OCI-LY7 (cell line): ENCODE measurements at regions of chr5 and their contacts with region 1.

Region 1: GRCh38 chr5:157900644-157901043 is 41.7 kb upstream of the CLINT1 start:
- DNase-seq: peak; percentile 95
- H3K4me3 ChIP-seq: no peak overlapping the region
- H3K27ac ChIP-seq: peak overlapping the region; percentile 82
- H3K4me1 ChIP-seq: peaks cover 26% of the 10 kb centered on the region
- CTCF ChIP-seq: no peak

Region 2: GRCh38 chr5:157828944-157829632 is 71.6 kb before region 1 on chr5:
- CTCF ChIA-PET with region 1: no interaction called
- POLR2A ChIA-PET with region 1: interaction called, 9 read pairs
- intact Hi-C with region 1: loop called (anchors 2 kb)
- DNase-seq: no peak
- H3K4me3 ChIP-seq: peak overlapping the region; percentile 47
- H3K27ac ChIP-seq: peak overlapping the region; percentile 96
- H3K4me1 ChIP-seq: peaks cover 99% of the 10 kb centered on the region
- CTCF ChIP-seq: peak; percentile 50

Region 3: GRCh38 chr5:157912621-157913325 is 12.1 kb after region 1 on chr5:
- CTCF ChIA-PET with region 1: no interaction called
- POLR2A ChIA-PET with region 1: interaction called, 13 read pairs
- intact Hi-C with region 1: loop called (anchors 1 kb)
- DNase-seq: peak; percentile 95
- H3K4me3 ChIP-seq: peak overlapping the region; percentile 49
- H3K27ac ChIP-seq: peak overlapping the region; percentile 95
- H3K4me1 ChIP-seq: peaks cover 83% of the 10 kb centered on the region
- CTCF ChIP-seq: no peak

Region 4: GRCh38 chr5:157917899-157918809 is 17.5 kb after region 1 on chr5:
- CTCF ChIA-PET with region 1: no interaction called
- POLR2A ChIA-PET with region 1: interaction called, 13 read pairs
- intact Hi-C with region 1: loop called (anchors 1 kb)
- DNase-seq: peak; percentile 84
- H3K4me3 ChIP-seq: no peak overlapping the region
- H3K27ac ChIP-seq: peak overlapping the region; percentile 31
- H3K4me1 ChIP-seq: peaks cover 70% of the 10 kb centered on the region
- CTCF ChIP-seq: peak; percentile 90